ENCODE measurements at regions of chr14 and their contacts with region 1.

Region 1: GRCh38 chr14:24952851-24953666 is 96.9 kb downstream of the STXBP6 start:
- DNase-seq: no peak
- ATAC-seq: peak; percentile 32
- H3K4me3 ChIP-seq: no peak overlapping the region
- H3K27ac ChIP-seq: no peak overlapping the region
- H3K4me1 ChIP-seq: peaks cover 6% of the 10 kb centered on the region
- H3K27me3 ChIP-seq: no peaks in the 10 kb centered on the region
- CTCF ChIP-seq: peak in 2 of 3 experiments; percentile 10 to 30; a peak in 2 of 6 replicates
- EP300 ChIP-seq: no peak
- POLR2A ChIP-seq: no peak
- RAD21 ChIP-seq: no peak

Region 2: DNA sequence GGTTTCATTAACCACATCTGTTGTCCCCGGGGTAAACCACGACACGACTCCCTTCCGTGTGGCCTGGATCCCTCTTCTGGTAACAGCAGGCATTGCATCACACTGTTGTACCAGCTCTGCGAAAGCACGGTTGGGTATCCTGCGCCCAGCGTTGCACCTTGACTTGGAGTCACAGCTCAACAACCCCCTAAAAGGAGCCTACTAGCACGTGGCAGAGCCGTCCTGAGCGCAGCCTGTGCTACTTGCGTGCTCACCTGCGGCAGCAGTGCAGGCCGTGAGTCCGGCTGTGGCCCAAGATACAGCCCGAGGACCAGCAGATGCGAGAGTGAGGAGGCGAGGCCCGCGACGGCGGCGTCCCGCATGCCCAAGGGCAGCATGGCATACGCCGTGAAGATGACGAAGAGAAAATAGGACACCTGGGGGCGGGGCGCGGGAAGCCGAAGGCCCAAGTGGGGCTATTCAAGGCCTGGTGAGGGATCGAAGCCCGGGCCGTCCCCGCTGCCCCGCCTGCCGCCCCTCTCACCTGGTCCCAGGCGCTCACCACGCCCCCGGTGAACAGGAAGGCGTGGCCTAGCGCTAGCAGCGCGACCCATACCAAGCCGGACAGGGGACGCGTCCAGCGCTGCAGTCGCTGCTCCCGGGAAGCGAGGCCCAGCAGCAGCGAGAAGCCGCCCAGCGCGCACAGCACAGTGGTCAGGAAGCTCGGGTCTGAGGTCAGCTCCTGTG is 620.6 kb before region 1 on chr14:
- CTCF ChIA-PET with region 1: no interaction called
- POLR2A ChIA-PET with region 1: no interaction called
- RAD21 ChIA-PET with region 1: no interaction called
- SMC1A ChIA-PET with region 1: no interaction called
- in situ Hi-C with region 1: no loop called
- intact Hi-C with region 1: no loop called
- DNase-seq: peak; percentile 60
- ATAC-seq: peak; percentile 88
- H3K4me3 ChIP-seq: peak overlapping the region; percentile 35; the same call in 1 of the 2 replicates
- H3K27ac ChIP-seq: no peak overlapping the region
- H3K4me1 ChIP-seq: peaks cover 18% of the 10 kb centered on the region
- H3K27me3 ChIP-seq: peaks cover 2 to 12% of the 10 kb centered on the region in 2 experiments; a peak in 3 of 4 replicates
- CTCF ChIP-seq: peak; percentile 80 to 86 (median 85)
- EP300 ChIP-seq: no peak
- POLR2A ChIP-seq: no peak
- RAD21 ChIP-seq: peak; percentile 73

Region 3: DNA sequence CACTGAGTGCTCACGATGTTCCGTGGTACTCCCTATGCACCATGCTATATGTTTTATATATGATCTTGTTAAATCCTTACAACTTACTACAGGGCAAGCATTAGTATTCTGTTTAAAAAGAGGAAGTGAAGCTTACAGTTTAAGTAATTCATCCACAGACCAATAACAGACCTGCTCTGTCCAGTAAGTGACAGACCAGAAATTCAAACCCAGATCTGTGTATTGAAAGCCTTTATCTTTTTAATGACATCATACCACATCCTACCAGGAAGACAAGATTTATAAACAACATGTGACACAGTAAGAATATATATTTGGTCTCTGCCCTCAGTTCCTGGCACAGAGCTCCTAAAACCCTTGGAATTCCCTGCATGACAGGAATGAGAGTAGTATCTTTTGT is 109.6 kb before region 1 on chr14:
- CTCF ChIA-PET with region 1: no interaction called
- POLR2A ChIA-PET with region 1: no interaction called
- RAD21 ChIA-PET with region 1: interaction called, 3 read pairs
- SMC1A ChIA-PET with region 1: interaction called, 10 read pairs
- in situ Hi-C with region 1: no loop called
- intact Hi-C with region 1: no loop called
- DNase-seq: peak; percentile 13
- ATAC-seq: peak; percentile 97
- H3K4me3 ChIP-seq: no peak overlapping the region
- H3K27ac ChIP-seq: no peak overlapping the region
- H3K4me1 ChIP-seq: no peaks in the 10 kb centered on the region
- H3K27me3 ChIP-seq: no peaks in the 10 kb centered on the region
- CTCF ChIP-seq: no peak
- EP300 ChIP-seq: peak; percentile 10 to 50; a peak in 2 of 4 replicates
- POLR2A ChIP-seq: no peak
- RAD21 ChIP-seq: no peak

Region 4: GRCh38 chr14:24911324-24912109 is 41.5 kb before region 1 on chr14:
- CTCF ChIA-PET with region 1: interaction called, 3 read pairs
- POLR2A ChIA-PET with region 1: interaction called, 8 read pairs
- RAD21 ChIA-PET with region 1: interaction called, 6 read pairs
- SMC1A ChIA-PET with region 1: interaction called, 87 read pairs
- in situ Hi-C with region 1: no loop called
- intact Hi-C with region 1: no loop called
- DNase-seq: peak; percentile 27
- ATAC-seq: peak; percentile 71
- H3K4me3 ChIP-seq: no peak overlapping the region
- H3K27ac ChIP-seq: no peak overlapping the region
- H3K4me1 ChIP-seq: no peaks in the 10 kb centered on the region
- H3K27me3 ChIP-seq: no peaks in the 10 kb centered on the region
- CTCF ChIP-seq: no peak
- EP300 ChIP-seq: no peak
- POLR2A ChIP-seq: no peak
- RAD21 ChIP-seq: no peak

Region 5: GRCh38 chr14:24941719-24942118 is 11.3 kb before region 1 on chr14:
- CTCF ChIA-PET with region 1: interaction called, 6 read pairs
- POLR2A ChIA-PET with region 1: interaction called, 8 read pairs
- RAD21 ChIA-PET with region 1: interaction called, 26 read pairs
- SMC1A ChIA-PET with region 1: interaction called, 104 read pairs
- in situ Hi-C with region 1: no loop called
- intact Hi-C with region 1: no loop called
- DNase-seq: no peak
- ATAC-seq: peak; percentile 36
- H3K4me3 ChIP-seq: no peak overlapping the region
- H3K27ac ChIP-seq: peak overlapping the region; percentile 30; the same call in 1 of the 2 replicates
- H3K4me1 ChIP-seq: no peaks in the 10 kb centered on the region; the same call in none of the 2 replicates
- H3K27me3 ChIP-seq: no peaks in the 10 kb centered on the region
- CTCF ChIP-seq: no peak
- EP300 ChIP-seq: no peak
- POLR2A ChIP-seq: no peak
- RAD21 ChIP-seq: no peak

Region 6: GRCh38 chr14:25006961-25007795 is 54.1 kb after region 1 on chr14:
- CTCF ChIA-PET with region 1: interaction called, 3 read pairs
- POLR2A ChIA-PET with region 1: no interaction called
- RAD21 ChIA-PET with region 1: interaction called, 3 read pairs
- SMC1A ChIA-PET with region 1: interaction called, 20 read pairs
- in situ Hi-C with region 1: no loop called
- intact Hi-C with region 1: loop called (anchors 1 kb)
- DNase-seq: no peak
- ATAC-seq: peak; percentile 70
- H3K4me3 ChIP-seq: no peak overlapping the region
- H3K27ac ChIP-seq: no peak overlapping the region
- H3K4me1 ChIP-seq: no peaks in the 10 kb centered on the region
- H3K27me3 ChIP-seq: no peaks in the 10 kb centered on the region
- CTCF ChIP-seq: no peak
- EP300 ChIP-seq: peak; percentile 56 to 84; a peak in 3 of 4 replicates
- POLR2A ChIP-seq: no peak
- RAD21 ChIP-seq: no peak

Region 7: DNA sequence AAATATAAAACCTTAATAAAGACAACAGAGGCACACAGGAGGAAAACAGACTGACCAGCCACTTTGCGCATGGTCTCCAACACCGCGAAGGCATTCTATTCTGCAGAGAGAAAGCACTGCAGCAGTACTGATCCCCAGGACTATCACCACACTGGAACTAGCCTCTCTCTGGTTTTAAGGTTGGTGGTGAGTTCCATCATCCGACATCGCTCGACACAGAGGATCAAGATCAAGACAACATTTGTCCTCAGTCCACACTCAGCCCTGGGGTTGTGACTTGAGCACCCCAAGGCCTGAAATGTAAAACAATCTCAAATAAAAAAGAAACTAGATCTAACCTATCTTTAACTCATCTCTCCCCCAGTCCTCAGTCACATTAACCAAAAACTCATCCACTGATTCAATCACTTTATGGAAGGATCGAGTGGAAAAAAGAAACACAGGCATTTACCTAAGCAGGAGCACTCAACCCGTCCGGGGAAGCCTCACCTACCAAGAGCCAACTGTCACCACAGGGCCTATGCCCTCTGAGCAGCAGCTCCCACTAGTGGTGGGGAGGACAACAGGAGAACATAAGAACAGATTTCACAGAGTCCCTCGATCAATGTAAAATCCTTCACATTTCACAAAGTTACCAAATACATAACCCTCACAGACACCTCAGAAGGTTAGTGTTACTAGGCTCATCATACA is 79.2 kb after region 1 on chr14:
- CTCF ChIA-PET with region 1: interaction called, 35 read pairs
- POLR2A ChIA-PET with region 1: interaction called, 5 read pairs
- RAD21 ChIA-PET with region 1: interaction called, 9 read pairs
- SMC1A ChIA-PET with region 1: interaction called, 43 read pairs
- in situ Hi-C with region 1: no loop called
- intact Hi-C with region 1: no loop called
- DNase-seq: no peak
- ATAC-seq: peak; percentile 93
- H3K4me3 ChIP-seq: no peak overlapping the region
- H3K27ac ChIP-seq: no peak overlapping the region
- H3K4me1 ChIP-seq: no peaks in the 10 kb centered on the region
- H3K27me3 ChIP-seq: no peaks in the 10 kb centered on the region
- CTCF ChIP-seq: peak; percentile 51 to 80 (median 66)
- EP300 ChIP-seq: no peak; a peak in 1 of 4 replicates
- POLR2A ChIP-seq: no peak
- RAD21 ChIP-seq: no peak